Activated CD4-positive, alpha-beta T cell treated with anti-CD3 and anti-CD28 coated beads for 36 hours (primary cell): ENCODE measurements at regions of chrX and their contacts with region 1.

Region 1: DNA sequence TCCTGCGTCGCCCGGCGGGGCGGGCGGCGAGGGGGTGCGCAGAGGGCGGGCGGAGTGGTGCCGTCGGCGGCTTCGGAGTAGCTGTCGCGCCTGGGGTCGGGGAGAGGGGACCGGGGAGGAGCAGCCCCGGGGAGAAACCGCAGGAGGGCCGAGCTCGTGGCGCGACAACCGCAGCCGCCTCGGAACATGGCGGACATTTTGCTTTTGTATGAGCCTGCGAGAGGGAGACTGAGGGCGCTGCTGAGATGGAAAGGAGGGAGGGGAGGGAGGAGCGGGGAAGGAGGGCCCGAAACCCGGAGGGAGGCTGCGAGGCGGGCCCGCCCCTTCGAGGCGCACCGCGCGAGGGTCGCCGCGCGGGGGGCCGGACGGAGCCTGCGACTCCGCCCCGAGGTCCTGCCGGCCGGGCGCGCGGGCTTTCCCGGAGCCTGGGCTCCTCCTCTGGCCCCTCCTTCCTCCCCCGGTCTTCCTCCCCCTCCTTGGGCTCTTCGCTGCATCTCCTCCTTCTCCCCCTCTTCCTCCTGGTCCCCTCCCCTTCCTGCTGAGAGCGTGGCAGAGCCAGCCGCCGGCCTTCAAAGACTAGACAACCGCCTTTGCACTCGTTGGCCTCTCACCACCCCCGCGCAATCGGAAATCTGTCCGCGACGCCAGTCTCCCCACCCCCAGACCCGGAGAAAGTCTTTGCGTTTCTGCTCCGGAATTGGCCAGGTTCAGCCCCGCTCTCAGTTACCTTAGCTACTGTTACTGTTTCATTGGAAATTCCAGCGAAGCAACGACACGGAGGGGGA is 1.1 kb downstream of the INTS6L start:
- DNase-seq: peak; percentile 92
- ATAC-seq: peak; percentile 73
- H3K4me3 Mint-ChIP-seq: peak overlapping the region; percentile 99
- H3K27ac Mint-ChIP-seq: peak overlapping the region; percentile 90
- H3K4me1 Mint-ChIP-seq: peaks cover 40% of the 10 kb centered on the region
- H3K27me3 Mint-ChIP-seq: no peaks in the 10 kb centered on the region

Region 2: GRCh38 chrX:134807039-134807731 is 714.4 kb before region 1 on chrX:
- CTCF ChIA-PET with region 1: no interaction called
- POLR2A ChIA-PET with region 1: no interaction called
- intact Hi-C with region 1: loop called in 1 of 2 experiments (anchors 5 kb)
- DNase-seq: peak; percentile 92
- ATAC-seq: peak; percentile 89
- H3K4me3 Mint-ChIP-seq: peak overlapping the region; percentile 82
- H3K27ac Mint-ChIP-seq: peak overlapping the region; percentile 96
- H3K4me1 Mint-ChIP-seq: peaks cover 23% of the 10 kb centered on the region
- H3K27me3 Mint-ChIP-seq: no peaks in the 10 kb centered on the region

Region 3: GRCh38 chrX:135060697-135061096 is 460.9 kb before region 1 on chrX:
- CTCF ChIA-PET with region 1: no interaction called
- POLR2A ChIA-PET with region 1: no interaction called
- intact Hi-C with region 1: no loop called
- DNase-seq: no peak
- ATAC-seq: no peak
- H3K4me3 Mint-ChIP-seq: no peak overlapping the region
- H3K27ac Mint-ChIP-seq: no peak overlapping the region
- H3K4me1 Mint-ChIP-seq: no peaks in the 10 kb centered on the region
- H3K27me3 Mint-ChIP-seq: no peaks in the 10 kb centered on the region

Region 4: GRCh38 chrX:135421537-135421931 is 100.1 kb before region 1 on chrX:
- CTCF ChIA-PET with region 1: no interaction called
- POLR2A ChIA-PET with region 1: no interaction called
- intact Hi-C with region 1: loop called in 1 of 2 experiments (anchors 1 kb)
- DNase-seq: peak; percentile 92
- ATAC-seq: peak; percentile 96
- H3K4me3 Mint-ChIP-seq: peak overlapping the region; percentile 64
- H3K27ac Mint-ChIP-seq: no peak overlapping the region
- H3K4me1 Mint-ChIP-seq: peaks cover 3% of the 10 kb centered on the region
- H3K27me3 Mint-ChIP-seq: no peaks in the 10 kb centered on the region

Region 5: GRCh38 chrX:135454816-135455215 is 66.8 kb before region 1 on chrX:
- CTCF ChIA-PET with region 1: no interaction called
- POLR2A ChIA-PET with region 1: no interaction called
- intact Hi-C with region 1: no loop called
- DNase-seq: no peak
- ATAC-seq: no peak
- H3K4me3 Mint-ChIP-seq: no peak overlapping the region
- H3K27ac Mint-ChIP-seq: no peak overlapping the region
- H3K4me1 Mint-ChIP-seq: no peaks in the 10 kb centered on the region
- H3K27me3 Mint-ChIP-seq: peaks cover 3% of the 10 kb centered on the region

Region 6: DNA sequence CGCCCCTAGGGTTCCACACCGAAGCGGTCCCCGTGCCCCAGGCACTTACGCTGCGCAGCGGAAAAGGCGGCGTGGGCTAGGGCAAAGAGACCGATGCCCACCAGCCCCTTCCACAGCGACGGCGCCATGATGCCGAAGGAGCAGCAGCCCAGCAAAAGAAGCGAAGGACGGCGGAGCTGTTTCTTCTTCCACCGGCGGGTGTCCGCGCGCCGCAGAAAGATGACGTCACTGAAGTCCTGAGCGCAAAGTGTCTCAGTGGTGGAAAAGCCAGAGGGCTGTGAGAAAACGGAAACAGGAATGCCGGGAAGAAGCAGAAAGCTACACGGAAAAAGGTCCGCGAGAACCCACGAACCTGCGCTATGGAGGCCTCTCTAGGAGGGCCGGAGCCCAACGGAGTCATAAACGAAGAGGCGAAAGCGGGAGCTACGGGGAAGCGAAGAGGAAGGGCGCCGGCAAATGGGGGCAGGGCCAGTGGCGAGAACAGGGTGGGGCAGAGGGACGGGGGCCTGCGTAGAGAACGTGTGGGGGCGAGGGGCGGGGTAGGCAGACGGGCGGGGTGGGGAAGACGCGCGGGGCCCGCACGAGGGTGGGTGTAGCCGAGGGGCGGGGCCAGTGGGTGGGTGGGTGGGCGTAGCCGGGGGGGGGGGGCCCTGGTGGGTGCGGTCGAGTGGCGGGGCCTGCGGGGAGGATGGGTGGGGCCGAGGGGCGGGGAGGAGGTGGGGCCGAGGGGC is 452.1 kb after region 1 on chrX and contains the start of gene MMGT1:
- CTCF ChIA-PET with region 1: no interaction called
- POLR2A ChIA-PET with region 1: no interaction called
- intact Hi-C with region 1: loop called in 1 of 2 experiments (anchors 1 kb)
- DNase-seq: peak; percentile 92
- ATAC-seq: peak; percentile 92
- H3K4me3 Mint-ChIP-seq: peak within 1 kb of the TSS; percentile 97
- H3K27ac Mint-ChIP-seq: peak within 1 kb of the TSS; percentile 97
- H3K4me1 Mint-ChIP-seq: peaks cover 34% of the 10 kb centered on the region
- H3K27me3 Mint-ChIP-seq: no peaks in the 10 kb centered on the region
- total RNA-seq, gene MMGT1: 16.1 to 18.1 TPM

Region 7: DNA sequence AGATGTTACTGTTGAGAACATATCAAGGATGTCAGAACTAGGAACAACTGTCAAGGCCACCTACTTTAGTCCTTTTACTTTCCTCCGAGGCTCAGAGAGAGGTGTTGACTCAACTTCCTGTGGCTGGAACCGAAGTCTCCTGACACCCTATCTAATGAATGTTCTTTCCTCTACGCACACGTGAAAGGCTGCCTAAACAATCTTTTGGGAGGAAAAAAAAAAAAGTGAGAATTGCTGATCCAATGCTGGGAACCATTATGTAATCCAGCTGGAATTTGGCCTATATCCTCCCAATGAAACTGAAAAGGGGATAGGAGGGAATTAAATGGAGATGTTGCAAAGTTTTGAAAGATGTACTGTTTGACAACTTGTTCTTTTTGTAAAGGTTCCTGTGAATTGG is 737.9 kb after region 1 on chrX:
- CTCF ChIA-PET with region 1: no interaction called
- POLR2A ChIA-PET with region 1: interaction called, 10 read pairs
- intact Hi-C with region 1: no loop called
- DNase-seq: peak; percentile 26
- ATAC-seq: peak; percentile 91
- H3K4me3 Mint-ChIP-seq: no peak overlapping the region
- H3K27ac Mint-ChIP-seq: peak overlapping the region; percentile 70
- H3K4me1 Mint-ChIP-seq: peaks cover 20% of the 10 kb centered on the region
- H3K27me3 Mint-ChIP-seq: no peaks in the 10 kb centered on the region

Region 8: GRCh38 chrX:136866337-136867095 is 1344.9 kb after region 1 on chrX:
- CTCF ChIA-PET with region 1: no interaction called
- POLR2A ChIA-PET with region 1: no interaction called
- intact Hi-C with region 1: loop called in 1 of 2 experiments (anchors 10 kb)
- DNase-seq: no peak
- ATAC-seq: no peak
- H3K4me3 Mint-ChIP-seq: peak overlapping the region; percentile 31
- H3K27ac Mint-ChIP-seq: peak overlapping the region; percentile 23
- H3K4me1 Mint-ChIP-seq: peaks cover 46% of the 10 kb centered on the region
- H3K27me3 Mint-ChIP-seq: no peaks in the 10 kb centered on the region